GM12878 (cell line): ENCODE measurements at regions of chr15 and their contacts with region 1.

Region 1: GRCh38 chr15:60526127-60526625 is 47.2 kb upstream of the ICE2 start:
- DNase-seq: no peak
- ATAC-seq: no peak
- H3K4me3 ChIP-seq: no peak overlapping the region
- H3K27ac ChIP-seq: no peak overlapping the region
- H3K4me1 ChIP-seq: peaks cover 5% of the 10 kb centered on the region; the same call in 1 of the 2 replicates
- H3K27me3 ChIP-seq: no peaks in the 10 kb centered on the region
- CTCF ChIP-seq: no peak
- EP300 ChIP-seq: no peak
- POLR2A ChIP-seq: no peak
- RAD21 ChIP-seq: no peak

Region 2: DNA sequence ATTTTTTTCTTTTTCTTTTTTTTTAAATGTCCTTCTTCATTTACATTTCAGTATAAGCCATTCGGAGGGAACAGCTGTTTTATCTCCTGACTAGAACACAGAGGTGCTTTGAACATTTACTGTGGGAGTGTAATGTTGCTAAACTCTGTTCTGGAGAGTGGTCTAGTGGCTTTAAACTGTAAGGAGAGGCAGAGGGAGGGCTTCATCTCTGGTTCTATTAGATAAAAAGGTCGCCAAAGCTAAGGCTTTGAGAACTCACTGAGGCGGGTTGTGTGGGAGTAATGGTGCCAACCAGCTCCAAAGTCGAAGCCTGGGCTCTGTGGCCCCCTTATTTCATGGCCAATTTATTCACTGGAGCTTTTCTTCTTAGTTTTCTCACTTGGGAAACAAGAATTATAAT is 261.6 kb before region 1 on chr15:
- CTCF ChIA-PET with region 1: no interaction called
- POLR2A ChIA-PET with region 1: no interaction called
- RAD21 ChIA-PET with region 1: no interaction called
- SMC1A ChIA-PET with region 1: no interaction called
- in situ Hi-C with region 1: no loop called
- intact Hi-C with region 1: no loop called
- DNase-seq: no peak
- ATAC-seq: no peak
- H3K4me3 ChIP-seq: no peak overlapping the region
- H3K27ac ChIP-seq: no peak overlapping the region
- H3K4me1 ChIP-seq: no peaks in the 10 kb centered on the region
- H3K27me3 ChIP-seq: peaks cover 3 to 4% of the 10 kb centered on the region in 2 experiments; a peak in 2 of 4 replicates
- CTCF ChIP-seq: no peak
- EP300 ChIP-seq: no peak
- POLR2A ChIP-seq: no peak
- RAD21 ChIP-seq: no peak

Region 3: GRCh38 chr15:60541481-60542299 is 15.5 kb after region 1 on chr15:
- CTCF ChIA-PET with region 1: interaction called, 52 read pairs
- POLR2A ChIA-PET with region 1: interaction called, 6 read pairs
- RAD21 ChIA-PET with region 1: interaction called, 3 read pairs
- SMC1A ChIA-PET with region 1: interaction called, 33 read pairs
- in situ Hi-C with region 1: no loop called
- intact Hi-C with region 1: no loop called
- DNase-seq: no peak
- ATAC-seq: peak; percentile 18; the same call in 2 of the 3 replicates
- H3K4me3 ChIP-seq: no peak overlapping the region
- H3K27ac ChIP-seq: no peak overlapping the region
- H3K4me1 ChIP-seq: peaks cover 16% of the 10 kb centered on the region
- H3K27me3 ChIP-seq: no peaks in the 10 kb centered on the region
- CTCF ChIP-seq: no peak
- EP300 ChIP-seq: no peak
- POLR2A ChIP-seq: no peak
- RAD21 ChIP-seq: no peak